Naive thymus-derived CD8-positive, alpha-beta T cell (primary cell): ENCODE measurements at regions of chr2 and their contacts with region 1.

Region 1: DNA sequence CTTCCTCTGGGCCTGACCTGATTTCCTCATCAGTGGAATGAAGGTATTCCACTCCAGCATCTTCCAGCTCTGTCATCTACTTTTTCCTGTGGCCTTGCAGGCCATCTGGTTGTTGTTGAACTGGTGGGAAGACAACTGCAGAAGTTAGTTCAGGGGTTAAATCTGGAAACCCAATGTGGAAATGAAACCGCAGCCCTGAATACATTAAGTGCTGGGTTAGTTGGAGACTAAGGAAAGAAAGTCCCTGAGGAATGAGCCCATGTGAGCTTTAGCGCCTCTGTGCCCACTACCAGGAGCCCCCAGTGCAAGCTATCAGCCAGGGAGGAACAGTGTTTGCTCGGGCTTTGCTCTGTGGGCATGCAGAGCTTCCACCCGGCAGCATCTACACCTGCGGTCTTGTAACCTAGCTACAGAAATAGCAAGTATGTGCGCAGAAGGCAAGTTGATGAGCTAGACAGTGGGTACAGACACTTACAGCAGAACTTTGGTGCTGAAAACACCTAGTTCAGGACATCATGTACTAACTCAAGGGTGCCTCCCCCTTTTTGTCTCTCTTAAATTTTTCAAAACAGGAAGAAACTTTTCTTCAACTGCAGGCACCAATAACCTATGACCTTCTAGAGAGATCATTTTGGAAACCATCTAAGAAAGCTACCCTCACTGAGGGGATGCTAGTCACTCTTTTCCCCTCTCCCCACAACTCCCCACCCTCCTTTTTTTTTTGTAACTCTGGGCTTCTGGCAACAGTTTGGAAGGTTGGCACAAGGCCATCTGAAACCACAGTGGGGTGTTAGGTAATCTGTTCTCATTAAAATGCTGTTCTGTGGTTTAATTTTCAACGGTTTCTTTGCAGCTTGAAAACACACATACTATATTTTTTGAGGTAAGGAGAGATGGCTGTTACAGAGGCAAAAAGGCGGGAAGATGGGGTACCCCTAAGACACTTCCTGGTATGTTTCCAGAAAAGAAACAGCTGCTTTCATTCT is 18.3 kb upstream of the CXCR4 start:
- DNase-seq: peak; percentile 64 to 97 (median 94)
- ATAC-seq: peak; percentile 58 to 60
- H3K4me3 Mint-ChIP-seq: peak overlapping the region; percentile 64 to 89 (median 84)
- H3K27ac Mint-ChIP-seq: peak overlapping the region; percentile 99 to 100 (median 100)
- H3K4me1 Mint-ChIP-seq: peaks cover 53 to 98% (median 95%) of the 10 kb centered on the region in 4 donors
- H3K27me3 Mint-ChIP-seq: no peaks in the 10 kb centered on the region

Region 2: GRCh38 chr2:136117909-136118818 is 18.1 kb before region 1 on chr2 and contains the start of gene CXCR4:
- POLR2A ChIA-PET with region 1: interaction called, 703 read pairs
- DNase-seq: peak; percentile 86 to 98 (median 94)
- ATAC-seq: peak; percentile 28 to 31
- H3K4me3 Mint-ChIP-seq: peak within 1 kb of the TSS; percentile 93 to 100 (median 99)
- H3K27ac Mint-ChIP-seq: peak within 1 kb of the TSS; percentile 99 to 100 (median 100)
- H3K4me1 Mint-ChIP-seq: peaks cover 47 to 78% (median 67%) of the 10 kb centered on the region in 4 donors
- H3K27me3 Mint-ChIP-seq: peaks cover 0 to 7% (median 0%) of the 10 kb centered on the region in 5 donors
- polyA plus RNA-seq, gene CXCR4: 439 to 1,161 (median 485) TPM

Region 3: GRCh38 chr2:136238286-136239078 is 102.3 kb after region 1 on chr2:
- POLR2A ChIA-PET with region 1: interaction called, 79 read pairs
- DNase-seq: peak in 7 of 10 donors; percentile 18 to 73 (median 51)
- ATAC-seq: peak; percentile 77 to 86
- H3K4me3 Mint-ChIP-seq: peak overlapping the region in 9 of 10 donors; percentile 11 to 61 (median 38)
- H3K27ac Mint-ChIP-seq: peak overlapping the region; percentile 87 to 96 (median 94)
- H3K4me1 Mint-ChIP-seq: peaks cover 36 to 89% (median 58%) of the 10 kb centered on the region in 4 donors
- H3K27me3 Mint-ChIP-seq: no peaks in the 10 kb centered on the region

Region 4: GRCh38 chr2:136378712-136379595 is 242.7 kb after region 1 on chr2:
- POLR2A ChIA-PET with region 1: interaction called, 34 read pairs
- DNase-seq: peak; percentile 48 to 86 (median 76)
- ATAC-seq: peak; percentile 40 to 59
- H3K4me3 Mint-ChIP-seq: peak overlapping the region in 1 of 10 donors; percentile 18
- H3K27ac Mint-ChIP-seq: peak overlapping the region; percentile 5 to 91 (median 85)
- H3K4me1 Mint-ChIP-seq: peaks cover 42 to 79% (median 68%) of the 10 kb centered on the region in 4 donors
- H3K27me3 Mint-ChIP-seq: no peaks in the 10 kb centered on the region